ENCODE measurements at regions of chr10 and their contacts with region 1.

Region 1: DNA sequence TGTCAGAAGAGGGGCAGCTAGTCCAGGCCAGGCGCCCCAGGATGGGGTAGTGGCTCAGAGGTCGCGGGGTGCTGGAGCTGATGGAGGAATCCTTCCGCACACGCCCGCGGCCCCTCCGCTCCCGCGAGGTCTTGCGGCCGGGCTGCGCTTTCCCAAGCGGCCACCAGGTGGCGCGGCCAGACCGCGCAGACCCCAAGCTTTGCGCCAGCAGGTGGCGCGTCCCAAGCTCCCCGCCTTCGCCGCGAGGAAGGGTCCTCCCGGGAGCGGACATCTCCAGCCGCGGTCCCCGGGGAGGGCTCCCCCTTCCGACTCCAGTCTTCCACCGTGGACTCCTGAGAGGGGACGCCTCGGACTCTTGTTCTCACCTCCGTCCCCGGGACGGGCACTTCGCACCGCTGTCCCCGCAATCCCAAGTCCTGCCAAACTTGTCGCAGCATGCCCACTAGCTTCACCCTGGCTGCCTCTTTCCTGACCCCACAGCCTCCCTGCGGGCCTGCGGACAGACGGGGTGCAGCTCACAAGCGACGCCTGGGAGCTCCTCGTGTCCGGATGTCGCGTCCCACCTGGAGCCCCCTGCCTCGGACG is 19.4 kb downstream of the KCNK18 start:
- DNase-seq: no peak
- H3K4me3 ChIP-seq: peak overlapping the region; percentile 67
- CTCF ChIP-seq: peak; percentile 100

Region 2: DNA sequence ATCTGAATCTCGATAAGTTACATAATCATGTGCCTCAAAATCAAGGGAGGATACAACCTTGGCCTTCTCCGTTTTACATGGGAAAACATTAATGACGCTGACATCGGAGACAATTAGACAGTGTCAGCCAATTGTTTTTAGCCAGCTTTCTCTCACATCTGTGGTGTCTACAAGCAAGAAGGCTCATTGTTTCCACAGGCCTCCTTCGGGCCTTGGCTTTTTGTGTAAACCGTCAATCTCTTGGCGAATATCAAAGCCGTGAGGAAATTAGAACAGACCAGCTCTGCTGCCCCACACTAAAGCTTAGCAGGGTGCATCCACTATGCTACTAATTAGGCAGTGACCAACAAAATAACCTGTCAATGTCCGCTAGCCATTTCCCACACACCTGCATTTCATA is 121.8 kb before region 1 on chr10:
- CTCF ChIA-PET with region 1: no interaction called
- POLR2A ChIA-PET with region 1: no interaction called
- DNase-seq: no peak
- H3K4me3 ChIP-seq: no peak overlapping the region
- CTCF ChIP-seq: no peak

Region 3: DNA sequence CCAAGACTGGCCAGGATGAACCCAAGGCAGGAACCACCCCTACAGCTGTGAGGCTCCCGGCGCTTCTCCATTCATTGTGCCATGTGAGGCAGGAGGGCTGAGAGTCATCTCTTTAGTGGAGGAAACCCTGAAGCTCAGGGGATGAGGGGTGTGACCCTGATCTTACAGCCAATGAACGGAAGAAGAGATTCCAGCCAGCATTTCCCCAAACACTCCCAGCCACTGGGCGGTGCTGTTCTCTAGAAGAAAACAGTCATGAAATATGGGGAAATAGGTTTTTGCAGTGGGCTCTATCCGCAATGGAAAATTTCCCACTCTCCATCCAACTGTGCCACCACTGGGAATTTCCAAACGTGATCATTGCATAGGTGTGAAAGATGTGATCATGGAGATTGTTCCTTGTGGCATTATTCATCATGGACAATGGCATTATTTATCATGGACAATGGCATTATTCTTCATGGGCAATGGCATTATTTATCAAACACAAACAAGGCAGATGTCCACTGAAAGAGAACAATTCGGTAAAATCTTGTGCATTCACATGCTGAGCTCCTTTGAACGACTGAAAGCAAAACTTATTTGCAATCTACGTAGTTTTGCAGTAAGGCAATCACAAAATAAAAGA is 10.2 kb after region 1 on chr10:
- CTCF ChIA-PET with region 1: interaction called, 74 read pairs
- POLR2A ChIA-PET with region 1: no interaction called
- DNase-seq: no peak
- H3K4me3 ChIP-seq: no peak overlapping the region
- CTCF ChIP-seq: peak; percentile 34

Region 4: GRCh38 chr10:117266400-117266799 is 49.7 kb after region 1 on chr10:
- CTCF ChIA-PET with region 1: interaction called, 12 read pairs
- POLR2A ChIA-PET with region 1: no interaction called
- DNase-seq: no peak
- H3K4me3 ChIP-seq: no peak overlapping the region
- CTCF ChIP-seq: no peak

Region 5: DNA sequence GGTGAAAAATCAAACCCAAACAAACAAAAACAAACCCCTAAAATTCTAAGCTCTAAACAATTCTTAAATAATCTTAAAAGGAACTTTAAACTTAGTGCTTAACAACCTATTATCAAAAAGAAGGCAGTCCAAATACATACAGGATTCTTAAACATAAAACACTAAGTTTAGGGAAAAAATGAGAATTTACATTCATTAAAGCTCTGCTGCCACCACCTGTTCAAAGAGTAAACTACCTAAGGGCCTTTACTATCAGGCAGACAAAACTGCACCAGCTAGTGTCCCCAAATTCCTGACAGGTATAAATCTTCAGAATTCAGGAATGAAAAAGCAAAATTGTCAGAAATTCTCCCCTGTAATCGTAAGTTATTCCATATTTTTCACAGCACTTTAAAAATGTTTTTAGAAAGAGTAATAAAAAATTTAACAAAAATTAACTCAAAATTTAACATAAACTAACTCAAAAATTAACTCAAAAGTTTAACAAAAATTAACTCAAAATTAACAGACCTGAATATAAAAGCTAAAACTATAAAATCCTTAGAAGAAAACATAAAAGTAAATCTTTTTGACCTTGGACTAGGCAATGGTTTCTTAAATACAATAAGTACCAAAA is 103.5 kb after region 1 on chr10:
- CTCF ChIA-PET with region 1: interaction called, 267 read pairs
- POLR2A ChIA-PET with region 1: no interaction called
- DNase-seq: no peak
- H3K4me3 ChIP-seq: no peak overlapping the region
- CTCF ChIP-seq: peak; percentile 40

Region 6: GRCh38 chr10:117431160-117431559 is 214.5 kb after region 1 on chr10:
- CTCF ChIA-PET with region 1: interaction called, 13 read pairs
- POLR2A ChIA-PET with region 1: no interaction called
- DNase-seq: peak; percentile 17
- H3K4me3 ChIP-seq: no peak overlapping the region
- CTCF ChIP-seq: peak; percentile 54

Measured in AG04449 (cell line).